Activated B cell treated with CpG ODN at 0.5 μM for 24 hours (primary cell): ENCODE measurements at regions of chr11 and their contacts with region 1.

Region 1: GRCh38 chr11:67420646-67421420 is 5.4 kb downstream of the CARNS1 start:
- DNase-seq: peak; percentile 98
- ATAC-seq: peak; percentile 85
- H3K4me3 Mint-ChIP-seq: peak overlapping the region; percentile 79
- H3K27ac Mint-ChIP-seq: peak overlapping the region; percentile 83
- H3K4me1 Mint-ChIP-seq: peaks cover 52% of the 10 kb centered on the region
- H3K27me3 Mint-ChIP-seq: no peaks in the 10 kb centered on the region
- CTCF ChIP-seq: no peak

Region 2: DNA sequence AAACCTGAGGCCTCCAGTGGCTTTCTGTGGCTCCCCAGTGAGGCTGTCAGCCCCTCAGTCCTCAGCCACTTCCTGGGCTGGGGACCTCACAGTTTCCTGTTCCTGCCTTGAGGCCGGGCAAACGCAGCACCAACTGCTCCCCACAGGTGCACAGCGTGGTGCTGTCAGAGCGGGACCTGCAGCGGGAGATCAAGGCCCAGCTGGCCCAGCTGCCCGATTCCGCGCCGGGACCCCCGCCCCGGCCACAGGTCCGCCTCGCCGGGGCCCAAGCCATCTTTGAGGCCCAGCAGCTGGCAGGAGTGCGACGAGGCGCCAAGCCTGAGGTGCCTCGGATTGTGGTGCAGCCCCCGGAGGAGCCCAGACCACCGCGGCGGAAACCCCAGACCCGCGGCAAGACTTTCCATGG is 11.6 kb before region 1 on chr11:
- CTCF ChIA-PET with region 1: interaction called, 53 read pairs
- POLR2A ChIA-PET with region 1: interaction called, 693 read pairs
- intact Hi-C with region 1: loop called (anchors 1 kb)
- DNase-seq: peak; percentile 61
- ATAC-seq: peak; percentile 63
- H3K4me3 Mint-ChIP-seq: peak overlapping the region; percentile 80
- H3K27ac Mint-ChIP-seq: peak overlapping the region; percentile 95
- H3K4me1 Mint-ChIP-seq: peaks cover 93% of the 10 kb centered on the region
- H3K27me3 Mint-ChIP-seq: no peaks in the 10 kb centered on the region
- CTCF ChIP-seq: no peak

Region 3: DNA sequence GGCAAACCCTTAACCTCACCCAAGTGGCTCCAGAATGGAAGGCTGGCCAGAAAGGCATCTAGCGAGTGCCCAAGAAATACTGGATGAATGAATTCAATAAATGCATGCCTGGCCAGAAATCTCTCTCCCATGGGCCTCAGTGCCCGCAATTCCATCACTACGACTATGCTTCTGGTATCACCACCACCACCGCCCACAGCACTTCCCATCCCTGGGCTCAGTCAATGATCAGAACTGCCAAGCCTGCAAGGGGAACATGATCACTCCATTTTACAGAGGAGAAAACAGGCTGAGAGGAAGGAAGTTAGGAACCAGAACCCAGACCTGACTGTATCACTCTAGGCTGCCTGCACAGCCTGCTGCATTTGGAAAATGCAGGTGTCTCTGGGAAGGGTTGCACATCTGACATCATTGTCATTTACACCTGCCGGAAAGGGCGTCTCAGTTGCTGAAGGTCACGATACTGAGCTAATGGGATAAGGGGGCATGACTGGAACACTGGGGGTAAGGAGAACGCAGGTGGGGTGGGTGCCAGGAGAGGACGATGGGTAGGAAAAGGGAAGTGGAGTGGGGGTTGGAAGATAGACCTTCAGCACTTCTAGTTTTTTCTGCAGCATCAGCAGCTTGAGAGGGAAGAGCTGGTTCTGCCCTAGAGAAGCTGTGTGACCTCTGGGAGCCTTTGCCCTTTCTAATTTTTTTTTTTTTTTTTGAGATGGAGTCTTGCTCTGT is 28.4 kb after region 1 on chr11:
- CTCF ChIA-PET with region 1: no interaction called
- POLR2A ChIA-PET with region 1: interaction called, 10 read pairs
- intact Hi-C with region 1: no loop called
- DNase-seq: no peak
- ATAC-seq: no peak
- H3K4me3 Mint-ChIP-seq: no peak overlapping the region
- H3K27ac Mint-ChIP-seq: peak overlapping the region; percentile 42
- H3K4me1 Mint-ChIP-seq: peaks cover 71% of the 10 kb centered on the region
- H3K27me3 Mint-ChIP-seq: no peaks in the 10 kb centered on the region
- CTCF ChIP-seq: no peak

Region 4: GRCh38 chr11:67675058-67675747 is 254.4 kb after region 1 on chr11:
- CTCF ChIA-PET with region 1: no interaction called
- POLR2A ChIA-PET with region 1: no interaction called
- intact Hi-C with region 1: no loop called
- DNase-seq: no peak
- ATAC-seq: no peak
- H3K4me3 Mint-ChIP-seq: no peak overlapping the region
- H3K27ac Mint-ChIP-seq: no peak overlapping the region
- H3K4me1 Mint-ChIP-seq: no peaks in the 10 kb centered on the region
- H3K27me3 Mint-ChIP-seq: peaks cover 22% of the 10 kb centered on the region
- CTCF ChIP-seq: no peak